Heart right ventricle (tissue), 16 donors: ENCODE measurements at regions of chr13 and their contacts with region 1.

Region 1: DNA sequence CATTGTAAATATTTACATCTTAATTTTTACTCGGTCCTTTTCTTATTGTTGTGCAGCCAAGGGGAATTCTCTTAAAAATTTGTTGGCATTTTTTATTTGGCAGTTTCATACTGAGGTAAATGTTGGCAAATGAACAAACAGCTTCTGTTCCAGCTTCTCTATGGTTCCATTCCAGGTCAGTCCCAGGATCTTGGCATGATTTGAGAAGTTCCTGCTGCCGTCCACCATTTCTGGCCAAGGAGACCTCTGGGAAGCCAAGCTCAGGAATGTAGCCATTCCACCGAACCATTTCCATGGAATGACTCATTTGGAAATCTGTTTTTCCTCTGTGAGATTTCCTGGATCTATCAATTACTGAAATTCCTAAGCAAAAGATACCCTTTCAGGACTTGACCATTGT is 43.9 kb downstream of the SLC10A2 start:
- DNase-seq: no peak
- ATAC-seq: no peak
- H3K4me3 ChIP-seq: no peak overlapping the region
- H3K27ac ChIP-seq: no peak overlapping the region
- H3K4me1 ChIP-seq: peaks cover 0 to 17% (median 4%) of the 10 kb centered on the region in 9 donors
- H3K27me3 ChIP-seq: no peaks in the 10 kb centered on the region
- CTCF ChIP-seq: no peak

Region 2: DNA sequence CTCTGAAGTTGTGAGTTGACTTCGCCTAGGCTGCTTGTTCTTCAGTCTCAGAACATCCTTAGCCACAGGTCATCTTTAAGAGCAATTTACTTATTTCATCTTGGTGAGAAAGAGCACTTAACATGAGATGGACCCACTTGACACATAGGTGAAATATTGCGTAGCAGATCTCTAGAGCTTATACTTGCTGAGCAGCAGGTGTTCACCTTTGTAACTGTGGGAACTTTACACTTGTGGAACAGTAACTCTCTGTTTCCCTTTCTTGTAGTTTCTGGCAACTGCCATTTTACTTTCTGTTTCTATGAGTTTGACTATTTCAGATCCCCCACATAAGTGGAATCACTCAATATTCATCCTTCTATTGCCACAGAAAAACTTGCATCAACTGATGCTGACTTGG is 51.8 kb before region 1 on chr13:
- intact Hi-C with region 1: no loop called
- DNase-seq: no peak
- ATAC-seq: no peak
- H3K4me3 ChIP-seq: no peak overlapping the region
- H3K27ac ChIP-seq: no peak overlapping the region
- H3K4me1 ChIP-seq: no peaks in the 10 kb centered on the region
- H3K27me3 ChIP-seq: peaks cover 0 to 6% (median 0%) of the 10 kb centered on the region in 7 donors
- CTCF ChIP-seq: no peak

Region 3: DNA sequence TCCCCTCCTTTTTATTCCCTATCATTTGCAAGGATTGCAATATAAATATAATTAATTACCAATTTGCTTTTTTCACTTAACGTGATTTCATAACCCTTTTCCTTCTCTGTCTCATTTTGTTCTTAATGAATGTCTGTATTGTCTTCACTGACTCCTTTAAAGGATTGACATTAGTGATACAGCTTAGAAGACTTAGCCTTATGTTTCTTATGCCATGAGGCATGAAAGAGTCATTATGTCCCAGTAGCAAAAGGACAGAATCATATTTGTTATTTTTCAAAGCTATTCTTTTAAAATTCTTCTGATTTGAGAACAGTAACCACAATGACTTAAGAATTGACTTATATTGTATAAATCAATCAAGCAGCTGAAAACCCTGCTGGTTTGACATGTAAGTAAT is 17.7 kb after region 1 on chr13:
- intact Hi-C with region 1: loop called in 1 of 10 experiments (anchors 2 kb)
- DNase-seq: no peak
- ATAC-seq: no peak
- H3K4me3 ChIP-seq: no peak overlapping the region
- H3K27ac ChIP-seq: no peak overlapping the region
- H3K4me1 ChIP-seq: no peaks in the 10 kb centered on the region
- H3K27me3 ChIP-seq: no peaks in the 10 kb centered on the region
- CTCF ChIP-seq: no peak

Region 4: GRCh38 chr13:103104340-103104739 is 82.0 kb after region 1 on chr13:
- intact Hi-C with region 1: no loop called
- DNase-seq: no peak
- ATAC-seq: no peak
- H3K4me3 ChIP-seq: no peak overlapping the region
- H3K27ac ChIP-seq: no peak overlapping the region
- H3K4me1 ChIP-seq: peaks cover 0 to 9% (median 0%) of the 10 kb centered on the region in 9 donors
- H3K27me3 ChIP-seq: no peaks in the 10 kb centered on the region
- CTCF ChIP-seq: no peak